Breast epithelium (tissue), 4 donors: ENCODE measurements at regions of chr14 and their contacts with region 1.

Region 1: GRCh38 chr14:68979021-68979782 is at the start of gene ACTN1:
- DNase-seq: peak; percentile 93 to 98
- H3K4me3 ChIP-seq: peak within 1 kb of the TSS; percentile 80 to 96 (median 85)
- H3K27ac ChIP-seq: peak within 1 kb of the TSS; percentile 98 to 99
- H3K4me1 ChIP-seq: peaks cover 0 to 20% of the 10 kb centered on the region in 2 donors
- H3K27me3 ChIP-seq: no peaks in the 10 kb centered on the region
- CTCF ChIP-seq: no peak
- POLR2A ChIP-seq: peak; percentile 64
- total RNA-seq, gene ACTN1: 75.0 to 295 (median 290) TPM

Region 2: GRCh38 chr14:68140111-68140741 is 839.0 kb before region 1 on chr14:
- intact Hi-C with region 1: loop called (anchors 10 kb)
- DNase-seq: peak in 1 of 2 donors; percentile 77
- H3K4me3 ChIP-seq: no peak overlapping the region
- H3K27ac ChIP-seq: peak overlapping the region; percentile 89 to 92
- H3K4me1 ChIP-seq: peaks cover 4 to 19% of the 10 kb centered on the region in 2 donors
- H3K27me3 ChIP-seq: no peaks in the 10 kb centered on the region
- CTCF ChIP-seq: peak in 1 of 3 donors; percentile 12
- POLR2A ChIP-seq: no peak

Region 3: DNA sequence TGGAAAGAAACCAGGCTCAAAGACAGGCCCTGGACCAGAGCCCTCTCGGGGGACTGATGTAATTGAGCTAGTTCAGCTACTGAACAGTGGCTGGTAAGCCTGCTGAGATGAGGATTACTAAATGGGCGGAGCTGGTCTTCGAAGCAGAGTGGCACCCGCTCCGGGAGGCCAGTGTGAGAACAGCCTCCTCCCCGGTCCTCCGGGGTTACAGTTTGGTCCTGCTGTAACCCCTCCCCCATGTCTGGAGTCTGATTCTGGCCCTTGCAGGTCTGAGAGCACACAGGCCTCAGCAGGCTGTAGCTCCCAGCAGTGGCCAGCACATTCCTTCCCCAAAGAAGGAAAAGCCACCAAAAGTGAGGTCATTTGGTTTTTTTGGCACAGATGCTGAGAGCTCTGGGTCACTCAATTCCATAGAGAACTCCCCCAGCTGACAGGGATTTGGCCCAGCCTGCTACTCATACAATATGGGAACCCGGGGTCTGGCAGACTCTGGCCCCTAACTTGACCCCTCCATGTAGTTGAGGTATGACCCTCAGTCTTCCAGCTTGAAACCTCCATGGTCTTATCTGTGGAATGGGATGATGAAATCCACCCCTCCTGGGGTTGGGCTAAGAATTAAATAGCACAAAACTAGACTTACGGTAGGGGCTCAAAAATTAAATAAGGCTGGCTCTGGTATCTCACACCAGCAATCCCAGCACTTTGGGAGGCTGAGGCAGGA is 39.1 kb before region 1 on chr14:
- intact Hi-C with region 1: no loop called
- DNase-seq: peak in 1 of 2 donors; percentile 88
- H3K4me3 ChIP-seq: peak overlapping the region in 1 of 3 donors; percentile 2
- H3K27ac ChIP-seq: peak overlapping the region; percentile 83 to 94
- H3K4me1 ChIP-seq: peaks cover 14 to 52% of the 10 kb centered on the region in 2 donors
- H3K27me3 ChIP-seq: no peaks in the 10 kb centered on the region
- CTCF ChIP-seq: no peak
- POLR2A ChIP-seq: no peak

Region 4: DNA sequence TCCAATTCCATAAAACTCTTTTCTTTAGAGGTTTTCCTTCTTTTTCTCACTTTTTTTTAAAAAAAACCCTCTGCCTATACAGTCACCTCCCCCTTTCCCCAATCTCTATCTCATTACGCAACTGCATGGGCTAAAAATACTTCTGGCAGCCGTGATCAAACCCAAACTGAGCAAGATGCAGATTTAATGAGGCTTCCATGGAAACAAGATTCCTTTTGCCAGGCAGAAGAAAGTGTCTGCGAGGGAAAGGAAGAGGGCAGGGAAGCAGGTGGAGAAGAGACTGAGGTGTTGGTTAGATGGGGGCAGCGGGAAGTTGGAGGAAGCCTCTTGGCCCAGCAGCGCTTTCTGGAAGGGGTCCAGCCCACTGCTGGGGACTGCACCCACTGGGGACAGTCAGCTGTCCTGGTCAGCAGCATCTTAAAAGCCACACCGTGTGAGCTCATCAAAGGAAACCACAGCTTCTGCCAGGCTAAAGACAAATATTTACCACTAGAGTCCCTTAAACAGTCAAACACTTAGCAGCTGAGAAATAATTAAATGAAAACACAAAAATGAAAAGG is 1119.1 kb after region 1 on chr14:
- intact Hi-C with region 1: no loop called
- DNase-seq: no peak
- H3K4me3 ChIP-seq: no peak overlapping the region
- H3K27ac ChIP-seq: no peak overlapping the region
- H3K4me1 ChIP-seq: no peaks in the 10 kb centered on the region
- H3K27me3 ChIP-seq: peaks cover 0 to 49% of the 10 kb centered on the region in 2 donors
- CTCF ChIP-seq: no peak
- POLR2A ChIP-seq: no peak